ENCODE measurements at regions of chr6 and their contacts with region 1.

Region 1: GRCh38 chr6:44925100-44925739 is 402.9 kb upstream of the RUNX2 start:
- DNase-seq: no peak
- H3K4me3 Mint-ChIP-seq: no peak overlapping the region
- H3K27ac Mint-ChIP-seq: peak overlapping the region; percentile 38
- H3K4me1 Mint-ChIP-seq: peaks cover 47% of the 10 kb centered on the region
- H3K27me3 Mint-ChIP-seq: no peaks in the 10 kb centered on the region

Region 2: DNA sequence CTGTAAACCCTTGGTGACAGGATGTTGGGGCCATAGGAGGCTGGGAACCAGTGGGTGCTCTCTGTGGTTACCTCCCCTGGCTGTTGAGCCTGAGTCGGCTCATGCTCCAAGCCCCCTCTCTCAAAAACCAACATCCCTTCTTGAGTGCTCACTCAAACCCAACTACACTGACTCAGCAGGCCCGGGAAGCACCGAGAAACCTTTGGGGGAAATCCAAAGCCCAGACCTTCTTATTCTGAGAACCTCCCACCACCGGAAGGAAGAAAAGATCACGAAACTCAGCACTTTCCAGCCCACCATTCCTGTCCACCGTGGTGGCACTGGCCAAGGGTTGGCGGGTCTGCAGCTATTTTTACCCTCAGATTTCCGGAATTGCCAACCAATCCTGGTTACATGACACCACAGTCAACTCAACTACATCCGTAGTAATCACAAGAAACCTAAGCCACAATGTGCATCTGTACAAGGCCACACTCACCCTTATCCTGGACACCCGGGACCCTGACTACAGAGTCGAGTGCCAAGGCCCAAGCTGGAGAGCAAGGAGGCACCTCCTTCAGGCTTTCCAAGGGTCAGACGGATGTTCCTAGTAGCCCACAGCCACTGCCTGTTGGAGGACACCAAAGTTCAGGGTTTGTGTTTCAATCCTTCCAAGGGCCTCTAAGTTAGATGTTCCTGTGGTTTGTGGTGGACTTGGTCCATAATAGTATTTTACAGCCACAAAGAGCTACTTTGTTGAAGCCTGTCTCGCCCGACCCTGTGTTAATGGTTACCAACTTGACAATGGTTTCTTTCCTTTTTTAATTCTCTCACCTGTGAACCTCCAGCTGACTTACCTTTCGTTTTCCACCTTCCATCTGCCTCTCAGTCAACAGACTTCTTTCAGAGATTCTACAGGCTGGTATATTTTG is 220.7 kb before region 1 on chr6:
- CTCF ChIA-PET with region 1: no interaction called
- POLR2A ChIA-PET with region 1: no interaction called
- intact Hi-C with region 1: loop called (anchors 10 kb)
- DNase-seq: peak; percentile 82
- H3K4me3 Mint-ChIP-seq: no peak overlapping the region
- H3K27ac Mint-ChIP-seq: peak overlapping the region; percentile 87
- H3K4me1 Mint-ChIP-seq: peaks cover 39% of the 10 kb centered on the region
- H3K27me3 Mint-ChIP-seq: no peaks in the 10 kb centered on the region

Region 3: DNA sequence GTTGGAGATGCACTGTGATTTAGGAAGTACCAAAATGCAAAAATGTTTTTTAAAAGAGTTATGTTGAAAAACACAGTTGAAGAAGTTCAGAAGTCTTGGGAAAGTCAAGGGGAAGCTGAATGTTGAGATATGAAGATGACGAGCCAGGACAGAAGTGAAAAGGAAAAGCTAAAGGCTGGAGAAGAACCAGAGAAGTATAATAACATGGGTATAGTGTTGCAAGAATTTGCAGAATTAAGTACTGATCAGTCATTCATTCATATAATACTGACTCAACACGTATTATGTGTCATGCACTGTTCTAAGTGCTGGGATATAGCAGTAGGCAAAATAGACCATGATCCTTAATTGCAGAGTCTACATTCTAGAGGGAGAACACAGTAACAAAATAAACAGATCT is 104.9 kb before region 1 on chr6:
- CTCF ChIA-PET with region 1: no interaction called
- POLR2A ChIA-PET with region 1: no interaction called
- intact Hi-C with region 1: no loop called
- DNase-seq: no peak
- H3K4me3 Mint-ChIP-seq: no peak overlapping the region
- H3K27ac Mint-ChIP-seq: no peak overlapping the region
- H3K4me1 Mint-ChIP-seq: no peaks in the 10 kb centered on the region
- H3K27me3 Mint-ChIP-seq: no peaks in the 10 kb centered on the region

Region 4: GRCh38 chr6:44976719-44977641 is 51.8 kb after region 1 on chr6:
- CTCF ChIA-PET with region 1: no interaction called
- POLR2A ChIA-PET with region 1: no interaction called
- intact Hi-C with region 1: loop called (anchors 2 kb)
- DNase-seq: no peak
- H3K4me3 Mint-ChIP-seq: no peak overlapping the region
- H3K27ac Mint-ChIP-seq: peak overlapping the region; percentile 33
- H3K4me1 Mint-ChIP-seq: peaks cover 39% of the 10 kb centered on the region
- H3K27me3 Mint-ChIP-seq: no peaks in the 10 kb centered on the region

Region 5: DNA sequence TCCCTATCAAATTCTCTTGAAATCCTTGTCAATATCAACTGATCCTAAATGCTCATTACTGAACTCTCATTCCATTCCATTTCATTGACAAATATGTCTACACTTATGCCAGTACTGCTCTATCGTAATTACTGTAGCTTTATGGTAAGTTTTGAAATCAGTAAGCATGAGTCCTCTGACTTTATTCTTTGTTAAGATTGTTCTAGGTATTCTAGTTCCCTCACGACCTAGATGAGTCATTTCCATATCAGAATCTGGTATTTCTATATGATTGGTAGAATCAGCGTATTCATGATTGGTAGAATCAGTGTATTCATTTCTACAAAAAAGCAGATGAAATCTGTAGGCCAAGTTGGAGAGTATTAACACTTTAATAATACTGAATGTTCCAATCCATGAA is 84.4 kb after region 1 on chr6:
- CTCF ChIA-PET with region 1: no interaction called
- POLR2A ChIA-PET with region 1: no interaction called
- intact Hi-C with region 1: loop called (anchors 1 kb)
- DNase-seq: no peak
- H3K4me3 Mint-ChIP-seq: no peak overlapping the region
- H3K27ac Mint-ChIP-seq: peak overlapping the region; percentile 66
- H3K4me1 Mint-ChIP-seq: peaks cover 25% of the 10 kb centered on the region
- H3K27me3 Mint-ChIP-seq: no peaks in the 10 kb centered on the region

Region 6: GRCh38 chr6:45979311-45979710 is 1054.1 kb after region 1 on chr6:
- CTCF ChIA-PET with region 1: no interaction called
- POLR2A ChIA-PET with region 1: no interaction called
- intact Hi-C with region 1: no loop called
- DNase-seq: no peak
- H3K4me3 Mint-ChIP-seq: no peak overlapping the region
- H3K27ac Mint-ChIP-seq: no peak overlapping the region
- H3K4me1 Mint-ChIP-seq: no peaks in the 10 kb centered on the region
- H3K27me3 Mint-ChIP-seq: no peaks in the 10 kb centered on the region